ENCODE measurements at regions of chr17 and their contacts with region 1.

Region 1: DNA sequence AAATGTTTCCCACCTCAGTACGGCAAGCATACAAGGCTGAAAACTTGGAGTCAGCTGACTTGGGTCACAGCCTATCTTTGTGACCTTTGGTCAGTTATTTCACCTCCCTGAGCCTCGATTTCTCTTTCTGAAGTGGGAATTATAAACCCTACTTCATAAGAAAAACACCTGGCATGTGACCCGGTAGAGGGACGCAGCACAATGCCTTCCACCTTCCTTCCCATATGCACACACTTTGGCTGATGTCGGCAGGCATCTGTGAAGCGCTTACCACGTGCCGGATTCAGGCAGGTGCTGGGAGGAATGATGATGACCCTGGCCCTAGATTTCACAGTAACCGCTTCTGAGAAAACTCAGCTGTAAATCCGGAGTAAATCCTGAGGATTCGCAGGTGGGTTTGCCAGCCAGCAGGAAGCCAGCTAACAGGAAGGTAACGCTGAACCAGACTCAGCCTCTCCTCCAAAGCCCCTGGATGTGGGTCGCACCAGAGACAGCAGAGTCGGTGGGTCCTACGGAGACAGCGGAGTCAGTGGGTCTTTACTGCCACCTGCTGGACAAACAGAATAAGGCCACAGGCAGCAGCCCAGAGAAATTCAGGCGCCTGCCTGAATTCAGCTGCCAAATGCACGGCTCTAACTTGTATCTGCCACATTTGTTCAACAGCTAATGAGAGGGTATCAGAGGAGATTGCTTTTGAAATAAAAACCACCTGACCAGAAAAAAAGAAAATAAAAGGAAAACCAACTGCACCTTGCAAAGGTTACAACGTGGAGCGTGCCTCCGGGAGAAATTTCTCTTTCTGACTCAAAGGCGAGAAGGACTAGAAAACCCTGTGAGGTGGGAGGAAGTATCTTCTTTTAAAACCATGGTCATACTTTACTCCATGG is 16.6 kb downstream of the COPRS start:
- DNase-seq: no peak
- ATAC-seq: peak; percentile 96
- H3K4me3 ChIP-seq: no peak overlapping the region
- H3K27ac ChIP-seq: no peak overlapping the region
- H3K4me1 ChIP-seq: no peaks in the 10 kb centered on the region
- H3K27me3 ChIP-seq: no peaks in the 10 kb centered on the region
- CTCF ChIP-seq: peak; percentile 90 to 95 (median 92)
- EP300 ChIP-seq: no peak
- POLR2A ChIP-seq: no peak
- RAD21 ChIP-seq: peak; percentile 96

Region 2: DNA sequence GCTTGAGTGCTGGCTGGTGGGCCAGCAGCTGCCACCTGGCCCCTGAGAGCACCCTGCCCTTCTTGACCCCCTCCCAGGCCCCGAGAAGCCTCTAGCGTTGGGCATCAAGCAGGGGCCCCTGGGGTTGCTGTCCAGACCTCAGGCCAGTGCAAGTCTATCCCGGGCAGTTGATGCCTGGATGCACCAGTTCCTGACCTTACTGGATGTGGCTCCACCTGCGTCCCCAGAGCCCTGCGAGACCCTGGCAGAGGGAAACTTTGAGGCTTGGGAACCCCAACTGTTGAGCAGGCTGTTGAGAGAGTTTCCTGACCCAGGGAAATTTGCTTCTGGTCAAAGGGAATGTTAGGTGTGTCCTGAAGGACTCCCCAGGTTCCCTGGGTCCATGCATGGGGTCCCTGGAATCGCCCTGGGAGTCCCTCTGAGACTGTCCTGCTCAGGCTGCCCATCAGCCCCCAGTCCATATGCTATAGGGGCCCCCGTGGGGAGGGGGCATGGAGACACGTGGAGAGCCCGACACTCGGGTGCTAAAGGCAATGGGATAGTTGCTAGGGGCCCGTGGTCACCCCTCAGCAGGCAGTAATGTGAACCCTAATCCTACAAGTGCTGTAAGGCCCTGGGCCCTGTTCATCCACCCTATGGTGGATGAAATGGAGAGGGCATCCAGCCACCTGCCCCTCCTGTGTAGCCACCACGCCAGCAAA is 404.6 kb before region 1 on chr17:
- CTCF ChIA-PET with region 1: interaction called, 23 read pairs
- POLR2A ChIA-PET with region 1: no interaction called
- RAD21 ChIA-PET with region 1: interaction called, 11 read pairs
- SMC1A ChIA-PET with region 1: interaction called, 17 read pairs
- in situ Hi-C with region 1: loop called (anchors 5 kb)
- intact Hi-C with region 1: loop called (anchors 1 kb)
- DNase-seq: no peak
- ATAC-seq: no peak; the same call in 2 of the 3 replicates
- H3K4me3 ChIP-seq: no peak overlapping the region
- H3K27ac ChIP-seq: no peak overlapping the region
- H3K4me1 ChIP-seq: no peaks in the 10 kb centered on the region
- H3K27me3 ChIP-seq: no peaks in the 10 kb centered on the region
- CTCF ChIP-seq: no peak
- EP300 ChIP-seq: no peak
- POLR2A ChIP-seq: no peak
- RAD21 ChIP-seq: no peak

Region 3: GRCh38 chr17:31524926-31525800 is 317.3 kb before region 1 on chr17:
- CTCF ChIA-PET with region 1: interaction called, 27 read pairs
- POLR2A ChIA-PET with region 1: no interaction called
- RAD21 ChIA-PET with region 1: interaction called, 5 read pairs
- SMC1A ChIA-PET with region 1: interaction called, 11 read pairs
- in situ Hi-C with region 1: loop called (anchors 10 kb)
- intact Hi-C with region 1: no loop called
- DNase-seq: no peak
- ATAC-seq: peak; percentile 98
- H3K4me3 ChIP-seq: no peak overlapping the region
- H3K27ac ChIP-seq: no peak overlapping the region
- H3K4me1 ChIP-seq: no peaks in the 10 kb centered on the region; the same call in 1 of the 2 replicates
- H3K27me3 ChIP-seq: no peaks in the 10 kb centered on the region
- CTCF ChIP-seq: peak; percentile 90 to 97 (median 95); a peak in 5 of 6 replicates
- EP300 ChIP-seq: no peak
- POLR2A ChIP-seq: peak; percentile 44; the same call in 1 of the 2 replicates
- RAD21 ChIP-seq: peak; percentile 98

Region 4: DNA sequence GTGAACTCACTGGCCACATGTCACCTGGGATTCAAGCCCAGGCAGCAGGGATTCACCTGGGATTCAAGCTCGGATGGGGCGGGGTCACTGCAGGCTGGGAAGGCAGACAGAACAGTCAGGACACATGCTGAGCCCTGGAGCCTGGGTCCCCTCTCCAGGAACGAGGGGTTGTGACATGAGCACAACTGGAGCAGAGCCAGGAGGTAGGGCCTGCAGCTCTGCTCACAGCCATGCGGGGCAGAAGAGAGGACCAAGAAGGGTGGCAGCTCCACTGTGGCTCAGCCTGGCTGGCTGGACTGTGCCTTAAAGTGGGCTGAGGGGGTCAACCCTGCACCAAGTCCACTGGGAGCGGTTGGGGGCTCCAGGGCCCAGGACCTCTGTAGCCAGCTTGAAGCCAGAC is 300.9 kb before region 1 on chr17:
- CTCF ChIA-PET with region 1: interaction called, 15 read pairs
- POLR2A ChIA-PET with region 1: no interaction called
- RAD21 ChIA-PET with region 1: interaction called, 65 read pairs
- SMC1A ChIA-PET with region 1: interaction called, 78 read pairs
- in situ Hi-C with region 1: loop called (anchors 10 kb)
- intact Hi-C with region 1: loop called (anchors 5 kb)
- DNase-seq: no peak
- ATAC-seq: peak; percentile 57
- H3K4me3 ChIP-seq: no peak overlapping the region
- H3K27ac ChIP-seq: no peak overlapping the region
- H3K4me1 ChIP-seq: peaks cover 22% of the 10 kb centered on the region
- H3K27me3 ChIP-seq: no peaks in the 10 kb centered on the region
- CTCF ChIP-seq: peak in 1 of 3 experiments; percentile 36; a peak in 1 of 6 replicates
- EP300 ChIP-seq: no peak
- POLR2A ChIP-seq: no peak
- RAD21 ChIP-seq: no peak

Region 5: DNA sequence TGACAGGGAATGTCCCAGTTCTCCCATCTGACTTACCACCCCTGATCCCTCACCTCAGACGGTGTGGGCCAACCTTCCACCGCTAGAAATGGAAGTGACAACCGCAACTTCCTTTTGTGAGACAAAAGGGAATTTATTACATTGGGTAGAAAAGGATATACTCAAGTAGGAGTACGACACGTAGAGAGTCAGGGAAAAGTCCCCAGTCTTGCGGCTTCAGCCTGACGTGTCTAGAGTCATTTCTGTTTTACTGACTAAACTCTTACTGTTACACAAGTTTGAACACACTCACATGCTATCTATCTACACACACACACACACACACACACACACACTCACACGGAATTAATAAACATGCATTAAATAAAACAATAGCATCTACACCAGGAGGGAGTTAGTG is 162.3 kb before region 1 on chr17:
- CTCF ChIA-PET with region 1: no interaction called
- POLR2A ChIA-PET with region 1: no interaction called
- RAD21 ChIA-PET with region 1: no interaction called
- SMC1A ChIA-PET with region 1: no interaction called
- in situ Hi-C with region 1: no loop called
- intact Hi-C with region 1: loop called (anchors 10 kb)
- DNase-seq: peak; percentile 71
- ATAC-seq: peak; percentile 89
- H3K4me3 ChIP-seq: 0 out of 2 replicates have a peak overlapping the region, but pooled peaks have one; percentile 3
- H3K27ac ChIP-seq: no peak overlapping the region
- H3K4me1 ChIP-seq: peaks cover 5% of the 10 kb centered on the region; the same call in 1 of the 2 replicates
- H3K27me3 ChIP-seq: no peaks in the 10 kb centered on the region
- CTCF ChIP-seq: no peak
- EP300 ChIP-seq: peak; percentile 70 to 83; a peak in 3 of 4 replicates
- POLR2A ChIP-seq: no peak
- RAD21 ChIP-seq: no peak

Region 6: GRCh38 chr17:31900877-31901276 is 58.5 kb after region 1 on chr17:
- CTCF ChIA-PET with region 1: interaction called, 10 read pairs
- POLR2A ChIA-PET with region 1: no interaction called
- RAD21 ChIA-PET with region 1: interaction called, 7 read pairs
- SMC1A ChIA-PET with region 1: interaction called, 5 read pairs
- in situ Hi-C with region 1: no loop called
- intact Hi-C with region 1: no loop called
- DNase-seq: no peak
- ATAC-seq: peak; percentile 39
- H3K4me3 ChIP-seq: peak overlapping the region; percentile 72
- H3K27ac ChIP-seq: peak overlapping the region; percentile 74
- H3K4me1 ChIP-seq: peaks cover 6% of the 10 kb centered on the region
- H3K27me3 ChIP-seq: no peaks in the 10 kb centered on the region
- CTCF ChIP-seq: no peak
- EP300 ChIP-seq: no peak
- POLR2A ChIP-seq: no peak
- RAD21 ChIP-seq: no peak

Region 7: GRCh38 chr17:32461853-32462617 is 619.6 kb after region 1 on chr17:
- CTCF ChIA-PET with region 1: no interaction called
- POLR2A ChIA-PET with region 1: no interaction called
- RAD21 ChIA-PET with region 1: no interaction called
- SMC1A ChIA-PET with region 1: no interaction called
- in situ Hi-C with region 1: no loop called
- intact Hi-C with region 1: no loop called
- DNase-seq: no peak
- ATAC-seq: peak; percentile 93
- H3K4me3 ChIP-seq: no peak overlapping the region
- H3K27ac ChIP-seq: no peak overlapping the region
- H3K4me1 ChIP-seq: no peaks in the 10 kb centered on the region
- H3K27me3 ChIP-seq: no peaks in the 10 kb centered on the region
- CTCF ChIP-seq: peak; percentile 35 to 64 (median 59); a peak in 5 of 6 replicates
- EP300 ChIP-seq: no peak
- POLR2A ChIP-seq: no peak
- RAD21 ChIP-seq: peak; percentile 42

Measured in GM12878 (cell line).